CD8-positive, alpha-beta T cell (primary cell): ENCODE measurements at regions of chr18 and their contacts with region 1.

Region 1: GRCh38 chr18:33282709-33283333 is 157.7 kb downstream of the CCDC178 start:
- DNase-seq: no peak
- ATAC-seq: no peak
- H3K4me3 ChIP-seq: no peak overlapping the region
- H3K4me3 Mint-ChIP-seq: no peak overlapping the region
- H3K27ac ChIP-seq: no peak overlapping the region
- H3K27ac Mint-ChIP-seq: no peak overlapping the region
- H3K4me1 ChIP-seq: no peaks in the 10 kb centered on the region
- H3K4me1 Mint-ChIP-seq: no peaks in the 10 kb centered on the region
- H3K27me3 ChIP-seq: no peaks in the 10 kb centered on the region
- H3K27me3 Mint-ChIP-seq: no peaks in the 10 kb centered on the region
- CTCF ChIP-seq: no peak

Region 2: GRCh38 chr18:31429621-31430020 is 1853.2 kb before region 1 on chr18:
- CTCF ChIA-PET with region 1: no interaction called
- POLR2A ChIA-PET with region 1: no interaction called
- intact Hi-C with region 1: loop called in 1 of 2 experiments (anchors 10 kb)
- DNase-seq: no peak
- ATAC-seq: no peak
- H3K4me3 ChIP-seq: no peak overlapping the region
- H3K4me3 Mint-ChIP-seq: no peak overlapping the region
- H3K27ac ChIP-seq: no peak overlapping the region
- H3K27ac Mint-ChIP-seq: no peak overlapping the region
- H3K4me1 ChIP-seq: no peaks in the 10 kb centered on the region
- H3K4me1 Mint-ChIP-seq: no peaks in the 10 kb centered on the region
- H3K27me3 ChIP-seq: no peaks in the 10 kb centered on the region
- H3K27me3 Mint-ChIP-seq: peaks cover 2% of the 10 kb centered on the region
- CTCF ChIP-seq: no peak